AG04449 (cell line): ENCODE measurements at regions of chrX and their contacts with region 1.

Region 1: GRCh38 chrX:152904151-152905080 is 6.5 kb downstream of the ZNF185 start:
- DNase-seq: peak; percentile 16
- H3K4me3 ChIP-seq: no peak overlapping the region
- CTCF ChIP-seq: peak; percentile 79

Region 2: GRCh38 chrX:152915527-152916241 is 11.3 kb after region 1 on chrX:
- CTCF ChIA-PET with region 1: interaction called, 18 read pairs
- POLR2A ChIA-PET with region 1: no interaction called
- DNase-seq: peak; percentile 9
- H3K4me3 ChIP-seq: no peak overlapping the region
- CTCF ChIP-seq: peak; percentile 49